Activated B cell treated with CpG ODN at 0.5 μM for 24 hours (primary cell): ENCODE measurements at regions of chr17 and their contacts with region 1.

Region 1: DNA sequence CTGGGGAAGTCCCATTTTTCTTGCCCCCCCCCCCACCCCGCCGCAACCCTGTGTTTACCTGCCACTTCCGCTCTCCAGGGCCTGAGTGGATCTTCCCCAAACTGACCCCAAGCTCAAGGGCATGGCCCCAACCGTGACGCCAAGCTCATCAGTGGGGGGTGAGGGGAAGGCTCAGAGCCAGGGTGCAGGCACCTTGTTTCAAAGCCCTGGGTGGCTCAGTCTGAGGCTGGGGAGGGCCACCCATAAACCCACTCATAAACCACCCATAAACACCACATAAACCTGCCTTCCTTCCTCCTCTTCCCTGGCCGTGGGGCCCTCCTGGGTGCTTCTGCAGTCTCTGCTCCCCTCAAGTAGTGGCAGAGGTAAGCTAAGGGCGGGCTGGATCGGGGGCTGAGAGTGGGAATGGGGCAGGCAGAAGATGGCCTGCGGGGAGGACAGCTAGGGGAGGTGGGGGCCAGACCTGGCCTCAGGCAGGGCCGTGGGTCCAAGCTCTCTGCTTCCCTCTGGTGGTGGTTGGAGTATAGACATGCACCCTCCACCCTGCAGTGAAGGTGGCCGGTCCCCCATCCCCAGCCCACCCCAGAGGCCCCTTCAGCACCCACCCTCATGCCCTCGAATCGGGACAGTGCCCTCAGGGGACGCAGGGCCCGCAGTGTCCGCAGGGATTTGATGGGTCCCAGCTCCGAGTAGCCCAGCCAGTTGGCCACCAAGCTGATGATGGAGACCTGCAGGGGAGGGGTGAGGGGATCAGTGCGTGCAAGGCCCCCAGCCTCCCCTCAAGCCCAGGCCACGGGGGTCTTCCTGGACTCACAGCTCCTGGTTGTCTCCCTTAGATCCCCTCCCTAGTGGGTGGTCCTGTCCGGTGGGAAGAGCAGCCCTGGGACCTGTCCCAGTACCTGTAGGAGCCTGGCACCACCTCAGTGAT is 14.6 kb upstream of the CD79B start:
- DNase-seq: peak; percentile 67
- ATAC-seq: peak; percentile 72
- H3K4me3 Mint-ChIP-seq: peak overlapping the region; percentile 74
- H3K27ac Mint-ChIP-seq: peak overlapping the region; percentile 91
- H3K4me1 Mint-ChIP-seq: peaks cover 47% of the 10 kb centered on the region
- H3K27me3 Mint-ChIP-seq: no peaks in the 10 kb centered on the region
- CTCF ChIP-seq: no peak

Region 2: DNA sequence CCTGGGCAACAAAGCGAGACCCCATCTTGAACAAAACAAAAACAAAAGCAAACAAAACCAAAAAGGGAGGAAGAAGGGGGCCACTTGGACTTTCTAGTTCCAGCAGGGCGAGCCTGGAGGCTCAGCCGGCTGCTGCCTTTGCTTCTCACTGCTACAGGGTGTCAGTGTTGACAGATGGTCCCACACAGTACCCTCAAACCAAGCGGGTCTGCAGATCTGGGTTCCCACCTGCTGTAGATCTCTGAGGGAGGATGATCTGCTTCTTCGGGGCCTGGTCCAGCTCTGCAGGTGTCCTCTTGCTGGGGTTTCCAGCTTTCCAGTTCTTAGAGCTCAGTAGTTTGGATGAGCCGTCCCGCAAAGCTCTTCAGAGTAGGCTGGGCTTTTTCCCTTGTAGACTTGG is 42.4 kb before region 1 on chr17:
- CTCF ChIA-PET with region 1: interaction called, 14 read pairs
- POLR2A ChIA-PET with region 1: interaction called, 3 read pairs
- intact Hi-C with region 1: no loop called
- DNase-seq: peak; percentile 10
- ATAC-seq: no peak
- H3K4me3 Mint-ChIP-seq: no peak overlapping the region
- H3K27ac Mint-ChIP-seq: no peak overlapping the region
- H3K4me1 Mint-ChIP-seq: peaks cover 4% of the 10 kb centered on the region
- H3K27me3 Mint-ChIP-seq: no peaks in the 10 kb centered on the region
- CTCF ChIP-seq: no peak

Region 3: DNA sequence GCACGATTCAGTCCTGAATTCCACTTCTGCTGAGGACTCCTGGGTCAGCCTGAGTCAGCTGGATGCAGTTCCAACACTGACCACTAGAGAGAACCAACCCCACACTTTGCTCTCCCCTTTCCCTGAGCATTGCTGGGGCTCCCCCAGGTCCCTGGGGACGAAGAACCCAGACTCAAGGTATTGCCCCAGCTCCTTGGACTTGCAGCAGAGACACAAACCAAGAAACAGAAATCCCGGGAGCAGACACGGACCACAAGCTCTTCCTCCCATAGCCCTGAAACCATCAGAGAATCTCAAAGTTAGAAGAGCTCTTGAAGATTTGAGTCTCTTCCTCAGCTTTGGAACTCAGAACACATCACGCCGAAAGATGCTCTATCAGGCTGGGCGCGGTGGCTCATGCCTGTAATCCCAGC is 27.4 kb before region 1 on chr17:
- CTCF ChIA-PET with region 1: interaction called, 321 read pairs
- POLR2A ChIA-PET with region 1: interaction called, 837 read pairs
- intact Hi-C with region 1: loop called (anchors 1 kb)
- DNase-seq: peak; percentile 65
- ATAC-seq: peak; percentile 49
- H3K4me3 Mint-ChIP-seq: peak overlapping the region; percentile 77
- H3K27ac Mint-ChIP-seq: peak overlapping the region; percentile 75
- H3K4me1 Mint-ChIP-seq: peaks cover 85% of the 10 kb centered on the region
- H3K27me3 Mint-ChIP-seq: no peaks in the 10 kb centered on the region
- CTCF ChIP-seq: no peak

Region 4: GRCh38 chr17:63931099-63931561 is 15.6 kb before region 1 on chr17:
- CTCF ChIA-PET with region 1: interaction called, 146 read pairs
- POLR2A ChIA-PET with region 1: interaction called, 837 read pairs
- intact Hi-C with region 1: loop called (anchors 1 kb)
- DNase-seq: peak; percentile 67
- ATAC-seq: peak; percentile 45
- H3K4me3 Mint-ChIP-seq: peak overlapping the region; percentile 98
- H3K27ac Mint-ChIP-seq: peak overlapping the region; percentile 96
- H3K4me1 Mint-ChIP-seq: peaks cover 89% of the 10 kb centered on the region
- H3K27me3 Mint-ChIP-seq: no peaks in the 10 kb centered on the region
- CTCF ChIP-seq: no peak

Region 5: GRCh38 chr17:64281962-64282727 is 335.4 kb after region 1 on chr17:
- CTCF ChIA-PET with region 1: no interaction called
- POLR2A ChIA-PET with region 1: no interaction called
- intact Hi-C with region 1: loop called (anchors 1 kb)
- DNase-seq: no peak
- ATAC-seq: peak; percentile 58
- H3K4me3 Mint-ChIP-seq: no peak overlapping the region
- H3K27ac Mint-ChIP-seq: no peak overlapping the region
- H3K4me1 Mint-ChIP-seq: no peaks in the 10 kb centered on the region
- H3K27me3 Mint-ChIP-seq: no peaks in the 10 kb centered on the region
- CTCF ChIP-seq: no peak